ENCODE measurements at regions of chr11 and their contacts with region 1.

Region 1: DNA sequence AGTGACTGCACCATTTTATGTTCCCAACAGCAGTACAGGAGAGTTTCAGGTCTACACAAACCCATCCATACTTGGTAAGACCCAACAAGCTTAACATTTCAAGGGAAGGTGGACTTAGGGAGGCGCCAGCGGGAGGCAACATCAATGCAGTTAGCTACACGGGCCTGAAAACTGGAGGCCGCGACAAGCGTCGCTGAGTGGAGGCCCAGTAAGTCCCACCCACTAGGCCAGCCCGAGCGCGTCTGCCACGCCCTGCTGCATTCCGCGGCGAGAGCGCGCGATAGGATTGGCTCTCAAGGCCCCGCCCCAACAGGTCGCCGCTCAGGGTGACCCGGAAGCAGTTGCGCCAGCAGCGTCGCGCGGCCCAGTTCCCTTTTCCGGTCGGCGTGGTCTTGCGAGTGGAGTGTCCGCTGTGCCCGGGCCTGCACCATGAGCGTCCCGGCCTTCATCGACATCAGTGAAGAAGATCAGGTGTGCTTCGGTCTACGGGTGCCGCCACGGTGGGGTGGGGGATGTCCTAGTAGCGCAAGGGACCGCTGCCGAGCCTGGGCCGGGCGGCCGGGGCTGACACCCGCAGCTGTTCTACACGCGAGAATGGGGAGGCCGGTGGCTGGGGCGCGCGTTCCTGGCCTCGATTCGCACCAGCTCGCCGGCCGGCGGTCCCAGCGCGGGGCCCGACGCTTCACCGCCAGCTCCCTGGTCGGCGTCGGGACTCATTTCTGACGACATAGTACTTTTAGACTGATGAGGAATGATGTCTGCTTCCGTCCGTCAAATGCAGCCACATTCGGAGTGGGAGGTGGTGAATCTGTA is at the start of gene EIF3M:
- DNase-seq: peak; percentile 90 to 95 (median 94)
- ATAC-seq: peak; percentile 100
- H3K4me3 ChIP-seq: peak within 1 kb of the TSS; percentile 87
- H3K4me3 Mint-ChIP-seq: peak within 1 kb of the TSS; percentile 93 to 99 (median 97)
- H3K27ac ChIP-seq: peak within 1 kb of the TSS; percentile 96
- H3K27ac Mint-ChIP-seq: peak within 1 kb of the TSS; percentile 94 to 99 (median 97)
- H3K4me1 ChIP-seq: peaks cover 27 to 28% of the 10 kb centered on the region in 2 donors
- H3K4me1 Mint-ChIP-seq: peaks cover 25 to 52% (median 44%) of the 10 kb centered on the region in 7 donors
- H3K27me3 ChIP-seq: no peaks in the 10 kb centered on the region
- H3K27me3 Mint-ChIP-seq: no peaks in the 10 kb centered on the region
- total RNA-seq, gene EIF3M: 210 to 250 (median 236) TPM

Region 2: DNA sequence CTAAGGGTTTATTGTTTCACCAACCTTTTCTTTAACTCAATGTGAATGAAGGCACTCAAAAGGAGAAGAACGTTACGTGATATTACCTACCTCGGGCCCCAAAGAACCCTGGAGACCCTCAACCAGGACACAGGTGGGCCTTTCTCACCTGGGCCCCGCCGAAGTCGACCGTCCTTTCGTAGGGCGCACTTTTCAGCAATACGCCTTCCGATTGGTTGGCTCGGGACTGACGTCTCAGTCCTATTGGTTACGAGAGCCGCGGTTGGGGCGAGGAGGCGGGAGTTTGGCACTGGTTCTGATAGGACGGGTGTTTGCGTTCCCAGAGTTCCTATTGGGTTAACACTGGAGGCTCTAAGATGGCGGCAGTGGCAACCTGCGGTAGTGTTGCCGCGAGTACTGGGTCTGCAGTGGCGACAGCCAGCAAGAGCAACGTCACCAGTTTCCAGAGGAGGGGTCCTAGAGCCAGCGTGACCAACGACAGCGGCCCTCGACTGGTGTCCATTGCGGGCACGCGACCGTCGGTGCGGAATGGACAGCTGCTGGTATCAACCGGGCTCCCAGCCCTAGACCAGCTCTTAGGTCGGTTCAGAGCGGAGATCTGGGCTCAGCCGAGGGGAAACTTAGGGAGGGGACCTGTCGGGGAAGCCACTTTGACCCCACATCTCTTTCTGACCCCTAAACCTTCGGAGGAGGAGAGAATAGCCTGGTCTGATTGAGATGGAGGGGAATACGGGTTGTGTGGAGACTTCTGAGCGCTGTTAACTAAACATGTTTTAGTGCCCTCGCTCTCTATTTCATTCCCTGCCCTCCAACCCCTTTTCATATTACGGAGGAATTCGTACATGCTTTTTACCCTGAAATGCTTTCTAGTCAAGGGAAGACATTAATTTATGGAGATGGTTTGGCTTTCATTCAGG is 1074.0 kb before region 1 on chr11 and contains the starts of genes ELP4 and IMMP1L:
- CTCF ChIA-PET with region 1: no interaction called
- POLR2A ChIA-PET with region 1: no interaction called
- intact Hi-C with region 1: loop called (anchors 5 kb)
- DNase-seq: peak; percentile 86 to 97 (median 95)
- ATAC-seq: peak; percentile 100
- H3K4me3 ChIP-seq: peak within 1 kb of the TSS; percentile 85
- H3K4me3 Mint-ChIP-seq: peak within 1 kb of the TSS; percentile 89 to 100 (median 99)
- H3K27ac ChIP-seq: peak within 1 kb of the TSS; percentile 79
- H3K27ac Mint-ChIP-seq: peak within 1 kb of the TSS; percentile 92 to 100 (median 98)
- H3K4me1 ChIP-seq: peaks cover 13 to 14% of the 10 kb centered on the region in 2 donors
- H3K4me1 Mint-ChIP-seq: peaks cover 21 to 70% (median 49%) of the 10 kb centered on the region in 7 donors
- H3K27me3 ChIP-seq: no peaks in the 10 kb centered on the region
- H3K27me3 Mint-ChIP-seq: peaks cover 0 to 2% (median 0%) of the 10 kb centered on the region in 5 donors
- total RNA-seq, gene ELP4: 16.8 to 23.2 (median 21.2) TPM
- total RNA-seq, gene IMMP1L: 9.4 to 20.0 (median 16.1) TPM

Region 3: GRCh38 chr11:32420937-32421901 is 162.4 kb before region 1 on chr11:
- CTCF ChIA-PET with region 1: no interaction called
- POLR2A ChIA-PET with region 1: no interaction called
- intact Hi-C with region 1: loop called in 1 of 2 experiments (anchors 10 kb)
- DNase-seq: peak in 3 of 9 donors; percentile 7 to 8 (median 7)
- ATAC-seq: peak; percentile 79
- H3K4me3 ChIP-seq: no peak overlapping the region
- H3K4me3 Mint-ChIP-seq: peak overlapping the region in 5 of 10 donors; percentile 7 to 53 (median 40)
- H3K27ac ChIP-seq: no peak overlapping the region
- H3K27ac Mint-ChIP-seq: peak overlapping the region in 1 of 9 donors; percentile 2
- H3K4me1 ChIP-seq: peaks cover 6 to 7% of the 10 kb centered on the region in 2 donors
- H3K4me1 Mint-ChIP-seq: peaks cover 11 to 21% (median 14%) of the 10 kb centered on the region in 7 donors
- H3K27me3 ChIP-seq: peaks cover 0 to 3% of the 10 kb centered on the region in 2 donors
- H3K27me3 Mint-ChIP-seq: peaks cover 24 to 74% (median 44%) of the 10 kb centered on the region in 5 donors

Region 4: GRCh38 chr11:32792948-32793475 is 209.3 kb after region 1 on chr11:
- CTCF ChIA-PET with region 1: no interaction called
- POLR2A ChIA-PET with region 1: no interaction called
- intact Hi-C with region 1: loop called in 1 of 2 experiments (anchors 10 kb)
- DNase-seq: peak; percentile 30 to 60 (median 49)
- ATAC-seq: peak; percentile 82
- H3K4me3 ChIP-seq: peak overlapping the region; percentile 38
- H3K4me3 Mint-ChIP-seq: peak overlapping the region in 7 of 10 donors; percentile 48 to 80 (median 56)
- H3K27ac ChIP-seq: no peak overlapping the region
- H3K27ac Mint-ChIP-seq: peak overlapping the region in 1 of 9 donors; percentile 59
- H3K4me1 ChIP-seq: no peaks in the 10 kb centered on the region
- H3K4me1 Mint-ChIP-seq: peaks cover 0 to 8% (median 5%) of the 10 kb centered on the region in 7 donors
- H3K27me3 ChIP-seq: no peaks in the 10 kb centered on the region
- H3K27me3 Mint-ChIP-seq: peaks cover 4 to 31% (median 9%) of the 10 kb centered on the region in 5 donors

Region 5: DNA sequence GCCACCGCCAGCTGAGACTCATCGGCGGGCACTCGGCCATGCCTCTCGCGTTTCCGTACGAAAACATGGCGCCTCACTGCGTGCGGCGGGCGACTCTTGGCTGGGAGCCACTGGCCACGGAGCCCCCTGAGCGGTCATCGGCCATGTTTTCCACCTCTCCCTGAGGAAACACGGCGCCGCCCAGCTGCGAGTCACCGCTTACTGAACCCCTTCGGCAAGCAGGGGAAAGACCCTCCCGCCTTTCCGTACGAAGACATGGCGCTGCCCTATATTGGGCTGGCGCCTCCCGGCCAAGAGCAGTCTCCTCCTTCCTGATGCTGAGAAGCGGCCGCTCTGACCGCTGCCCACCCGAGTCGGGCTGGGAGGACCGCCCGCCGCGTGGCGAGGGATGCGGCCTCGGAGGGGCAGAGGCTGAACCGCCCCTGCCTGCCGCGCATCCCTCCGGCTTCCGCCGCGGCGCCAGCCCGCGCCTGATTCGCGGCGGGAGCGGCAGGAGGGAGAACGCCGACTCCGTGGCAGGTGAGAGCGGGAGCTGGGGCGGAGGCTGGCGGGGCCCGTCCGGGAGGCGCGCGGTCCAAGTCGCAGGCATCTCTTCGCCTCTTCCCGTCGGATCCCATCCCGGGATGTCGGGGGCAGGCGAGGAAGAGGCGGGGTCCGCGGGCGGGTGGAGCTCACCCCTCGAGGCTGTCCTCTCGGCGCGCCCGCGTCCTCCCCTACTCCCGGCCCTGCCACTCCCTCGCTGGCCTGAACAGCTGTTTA is 455.8 kb after region 1 on chr11 and contains the start of gene TCP11L1:
- CTCF ChIA-PET with region 1: no interaction called
- POLR2A ChIA-PET with region 1: no interaction called
- intact Hi-C with region 1: loop called (anchors 1 kb)
- DNase-seq: peak; percentile 57 to 88 (median 76)
- ATAC-seq: peak; percentile 93
- H3K4me3 ChIP-seq: peak within 1 kb of the TSS; percentile 100
- H3K4me3 Mint-ChIP-seq: peak within 1 kb of the TSS; percentile 91 to 97 (median 94)
- H3K27ac ChIP-seq: peak within 1 kb of the TSS; percentile 82
- H3K27ac Mint-ChIP-seq: peak within 1 kb of the TSS; percentile 77 to 95 (median 92)
- H3K4me1 ChIP-seq: peaks cover 3 to 9% of the 10 kb centered on the region in 2 donors
- H3K4me1 Mint-ChIP-seq: peaks cover 0 to 17% (median 14%) of the 10 kb centered on the region in 7 donors
- H3K27me3 ChIP-seq: no peaks in the 10 kb centered on the region
- H3K27me3 Mint-ChIP-seq: peaks cover 0 to 17% (median 0%) of the 10 kb centered on the region in 5 donors
- total RNA-seq, gene TCP11L1: 9.1 to 17.1 (median 13.3) TPM

Region 6: DNA sequence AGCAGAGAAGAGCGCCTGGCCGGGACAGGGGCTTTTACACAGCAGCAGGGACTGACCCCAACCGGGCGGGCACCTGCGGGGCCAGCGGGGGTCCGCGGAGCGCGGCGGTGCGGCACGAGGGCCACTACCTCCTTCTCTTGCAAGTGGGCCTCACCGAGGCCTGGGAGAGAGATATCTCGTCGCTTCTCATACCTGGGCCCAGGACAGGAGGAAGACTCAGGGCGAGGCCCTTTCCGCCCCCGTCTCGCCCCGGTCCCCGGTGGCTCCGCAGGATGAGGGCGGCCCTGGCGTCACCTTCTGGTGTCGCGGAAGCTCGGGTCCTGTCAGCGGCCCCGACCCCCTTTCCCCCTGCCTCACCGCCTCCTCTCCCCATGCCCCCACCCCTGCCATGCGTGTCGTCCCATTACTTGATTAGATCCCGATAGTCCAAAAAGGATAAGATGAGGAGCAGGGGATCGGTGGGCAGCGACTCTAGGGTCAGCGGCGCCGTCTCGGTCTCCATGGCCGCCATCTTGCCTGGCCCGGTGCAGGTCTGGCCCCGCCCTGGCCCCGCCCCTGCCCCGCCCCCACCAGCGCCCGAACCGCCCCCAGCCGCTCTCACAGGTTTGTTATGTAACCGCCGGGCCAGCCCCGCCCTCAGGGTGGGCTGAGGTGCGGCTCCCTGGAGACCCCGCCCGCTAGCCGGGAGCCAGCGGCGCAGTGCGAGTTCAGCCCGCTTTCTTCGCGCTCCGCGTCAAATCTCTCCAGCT is 1190.5 kb after region 1 on chr11 and contains the start of gene FBXO3:
- CTCF ChIA-PET with region 1: no interaction called
- POLR2A ChIA-PET with region 1: no interaction called
- intact Hi-C with region 1: loop called in 1 of 2 experiments (anchors 10 kb)
- DNase-seq: peak; percentile 71 to 91 (median 88)
- ATAC-seq: peak; percentile 98
- H3K4me3 ChIP-seq: peak within 1 kb of the TSS; percentile 91
- H3K4me3 Mint-ChIP-seq: peak within 1 kb of the TSS; percentile 93 to 99 (median 97)
- H3K27ac ChIP-seq: peak within 1 kb of the TSS; percentile 83
- H3K27ac Mint-ChIP-seq: peak within 1 kb of the TSS; percentile 93 to 98 (median 96)
- H3K4me1 ChIP-seq: peaks cover 20 to 23% of the 10 kb centered on the region in 2 donors
- H3K4me1 Mint-ChIP-seq: peaks cover 33 to 58% (median 45%) of the 10 kb centered on the region in 7 donors
- H3K27me3 ChIP-seq: no peaks in the 10 kb centered on the region
- H3K27me3 Mint-ChIP-seq: peaks cover 0 to 34% (median 7%) of the 10 kb centered on the region in 5 donors
- total RNA-seq, gene FBXO3: 22.6 to 55.7 (median 47.7) TPM

Measured in naive thymus-derived CD4-positive, alpha-beta T cell (primary cell).